Mammary epithelial cell (primary cell): ENCODE measurements at regions of chr3 and their contacts with region 1.

Region 1: GRCh38 chr3:178325330-178325729 is 210.9 kb upstream of the KCNMB2 start:
- DNase-seq: no peak
- H3K4me3 ChIP-seq: no peak overlapping the region
- H3K27ac ChIP-seq: no peak overlapping the region
- H3K4me1 ChIP-seq: no peaks in the 10 kb centered on the region
- H3K27me3 ChIP-seq: no peaks in the 10 kb centered on the region
- CTCF ChIP-seq: peak; percentile 49 to 56

Region 2: DNA sequence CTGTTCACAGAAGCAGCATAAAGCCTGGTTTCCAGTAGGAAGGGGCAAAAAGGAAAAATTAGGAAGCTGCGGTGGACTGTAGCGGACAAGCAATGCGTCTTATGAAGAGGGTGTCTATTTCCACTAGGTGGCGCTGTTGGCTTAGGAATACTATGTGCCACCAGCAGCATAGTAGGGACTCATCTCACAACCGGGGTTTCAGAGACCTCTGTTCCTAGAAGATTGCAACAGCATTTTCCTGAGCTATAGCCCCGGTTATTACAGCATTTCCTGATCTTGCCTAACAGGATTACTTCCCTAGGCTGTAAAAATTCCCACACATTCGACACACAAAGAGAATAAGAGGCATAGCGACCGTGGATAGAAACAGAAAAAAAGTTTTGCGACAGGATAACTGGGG is 1811.0 kb before region 1 on chr3:
- CTCF ChIA-PET with region 1: no interaction called
- dilution Hi-C with region 1: no loop called
- in situ Hi-C with region 1: no loop called
- intact Hi-C with region 1: loop called (anchors 2 kb)
- DNase-seq: peak; percentile 32
- H3K4me3 ChIP-seq: no peak overlapping the region
- H3K27ac ChIP-seq: no peak overlapping the region
- H3K4me1 ChIP-seq: no peaks in the 10 kb centered on the region
- H3K27me3 ChIP-seq: no peaks in the 10 kb centered on the region
- CTCF ChIP-seq: peak; percentile 27 to 71

Region 3: GRCh38 chr3:176872771-176873209 is 1452.5 kb before region 1 on chr3:
- CTCF ChIA-PET with region 1: no interaction called
- dilution Hi-C with region 1: no loop called
- in situ Hi-C with region 1: no loop called
- intact Hi-C with region 1: loop called (anchors 10 kb)
- DNase-seq: peak; percentile 40
- H3K4me3 ChIP-seq: no peak overlapping the region
- H3K27ac ChIP-seq: no peak overlapping the region
- H3K4me1 ChIP-seq: no peaks in the 10 kb centered on the region
- H3K27me3 ChIP-seq: no peaks in the 10 kb centered on the region
- CTCF ChIP-seq: peak; percentile 88 to 90

Region 4: GRCh38 chr3:177050501-177051237 is 1274.7 kb before region 1 on chr3:
- CTCF ChIA-PET with region 1: no interaction called
- dilution Hi-C with region 1: no loop called
- in situ Hi-C with region 1: no loop called
- intact Hi-C with region 1: loop called (anchors 5 kb)
- DNase-seq: peak; percentile 24
- H3K4me3 ChIP-seq: no peak overlapping the region
- H3K27ac ChIP-seq: peak overlapping the region; percentile 22
- H3K4me1 ChIP-seq: peaks cover 8% of the 10 kb centered on the region
- H3K27me3 ChIP-seq: no peaks in the 10 kb centered on the region
- CTCF ChIP-seq: peak; percentile 40 to 54

Region 5: DNA sequence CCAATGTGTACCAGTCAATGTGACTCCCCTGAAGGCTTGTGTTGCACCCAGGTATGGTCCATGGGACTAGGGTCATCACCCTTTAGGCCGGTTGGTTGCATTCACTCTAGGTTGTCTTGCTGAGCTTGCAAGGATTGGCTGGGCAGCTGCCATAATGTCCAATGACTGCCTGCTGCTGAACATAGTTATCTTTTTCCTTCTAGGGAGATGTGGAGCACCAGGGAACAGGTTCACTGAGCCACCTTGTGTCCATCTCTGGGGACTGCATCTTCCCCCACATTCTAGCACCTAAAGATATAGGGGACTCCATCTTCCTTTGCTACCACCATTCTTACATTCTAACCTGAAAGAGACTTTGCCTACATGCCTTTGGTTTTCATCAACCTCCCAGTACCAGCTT is 547.6 kb before region 1 on chr3:
- CTCF ChIA-PET with region 1: no interaction called
- dilution Hi-C with region 1: no loop called
- in situ Hi-C with region 1: no loop called
- intact Hi-C with region 1: loop called (anchors 5 kb)
- DNase-seq: peak; percentile 68
- H3K4me3 ChIP-seq: no peak overlapping the region
- H3K27ac ChIP-seq: no peak overlapping the region
- H3K4me1 ChIP-seq: peaks cover 25% of the 10 kb centered on the region
- H3K27me3 ChIP-seq: no peaks in the 10 kb centered on the region
- CTCF ChIP-seq: peak; percentile 77 to 84

Region 6: GRCh38 chr3:178270838-178271237 is 54.5 kb before region 1 on chr3:
- CTCF ChIA-PET with region 1: no interaction called
- dilution Hi-C with region 1: no loop called
- in situ Hi-C with region 1: no loop called
- intact Hi-C with region 1: no loop called
- DNase-seq: peak; percentile 9
- H3K4me3 ChIP-seq: no peak overlapping the region
- H3K27ac ChIP-seq: no peak overlapping the region
- H3K4me1 ChIP-seq: no peaks in the 10 kb centered on the region
- H3K27me3 ChIP-seq: no peaks in the 10 kb centered on the region
- CTCF ChIP-seq: no peak

Region 7: GRCh38 chr3:178536211-178537079 is 211.1 kb after region 1 on chr3 and contains the start of gene KCNMB2:
- CTCF ChIA-PET with region 1: no interaction called
- dilution Hi-C with region 1: no loop called
- in situ Hi-C with region 1: no loop called
- intact Hi-C with region 1: no loop called
- DNase-seq: no peak
- H3K4me3 ChIP-seq: no peak within 1 kb of the TSS
- H3K27ac ChIP-seq: no peak within 1 kb of the TSS
- H3K4me1 ChIP-seq: no peaks in the 10 kb centered on the region
- H3K27me3 ChIP-seq: peaks cover 9% of the 10 kb centered on the region
- CTCF ChIP-seq: no peak
- total RNA-seq, gene KCNMB2: not detected

Region 8: GRCh38 chr3:178684881-178685590 is 359.7 kb after region 1 on chr3:
- CTCF ChIA-PET with region 1: no interaction called
- dilution Hi-C with region 1: no loop called
- in situ Hi-C with region 1: no loop called
- intact Hi-C with region 1: no loop called
- DNase-seq: no peak
- H3K4me3 ChIP-seq: no peak overlapping the region
- H3K27ac ChIP-seq: no peak overlapping the region
- H3K4me1 ChIP-seq: no peaks in the 10 kb centered on the region
- H3K27me3 ChIP-seq: peaks cover 3% of the 10 kb centered on the region
- CTCF ChIP-seq: no peak

Region 9: GRCh38 chr3:179604321-179605078 is 1279.2 kb after region 1 on chr3 and contains the starts of genes MRPL47 and NDUFB5:
- CTCF ChIA-PET with region 1: no interaction called
- dilution Hi-C with region 1: no loop called
- in situ Hi-C with region 1: no loop called
- intact Hi-C with region 1: no loop called
- DNase-seq: peak; percentile 92
- H3K4me3 ChIP-seq: peak within 1 kb of the TSS; percentile 57 to 75 (median 74)
- H3K27ac ChIP-seq: peak within 1 kb of the TSS; percentile 93
- H3K4me1 ChIP-seq: peaks cover 12% of the 10 kb centered on the region
- H3K27me3 ChIP-seq: no peaks in the 10 kb centered on the region
- CTCF ChIP-seq: no peak
- total RNA-seq, gene MRPL47: 29.3 to 45.1 TPM
- total RNA-seq, gene NDUFB5: 75.3 to 75.8 TPM